A549 (cell line): ENCODE measurements at regions of chr9 and their contacts with region 1.

Region 1: DNA sequence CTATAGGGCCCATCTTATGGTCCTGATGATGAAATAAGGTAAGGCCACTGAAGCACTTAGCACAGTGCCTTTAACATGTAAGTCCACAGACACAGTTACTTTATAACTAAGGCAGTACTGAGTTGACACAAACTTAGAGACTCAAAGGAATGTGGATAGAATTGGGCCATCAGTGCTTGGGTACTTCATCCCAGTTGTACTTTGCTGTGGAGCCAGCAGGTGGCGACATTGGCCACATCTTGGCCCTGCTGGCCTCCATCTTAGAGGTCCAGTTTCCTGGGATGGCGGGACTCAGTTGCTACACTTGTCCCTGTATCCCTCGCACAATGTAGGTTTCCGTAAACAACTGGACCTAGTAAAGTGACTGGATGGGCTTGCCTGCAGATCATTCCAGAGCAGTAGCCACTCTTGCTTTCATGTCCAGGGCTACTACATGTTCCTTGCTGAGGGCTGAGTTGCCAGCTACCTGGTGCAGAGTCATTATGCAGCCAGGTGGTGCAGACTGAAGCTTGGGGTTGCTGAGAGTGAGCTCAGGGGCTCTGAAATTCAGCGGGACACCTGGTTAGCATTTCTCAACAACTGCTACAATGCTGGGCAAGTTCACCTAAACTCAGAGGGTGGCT is 10.6 kb downstream of the MTAP start:
- DNase-seq: peak in 1 of 2 experiments; percentile 77
- ATAC-seq: peak; percentile 84 to 85
- H3K4me3 ChIP-seq: no peak overlapping the region
- H3K27ac ChIP-seq: peak overlapping the region; percentile 56 to 75
- H3K4me1 ChIP-seq: peaks cover 51% of the 10 kb centered on the region
- CTCF ChIP-seq: peak; percentile 88
- EP300 ChIP-seq: no peak
- POLR2A ChIP-seq: no peak
- RAD21 ChIP-seq: peak; percentile 90 to 92

Region 2: GRCh38 chr9:21559424-21560280 is 253.4 kb before region 1 on chr9:
- CTCF ChIA-PET with region 1: no interaction called
- POLR2A ChIA-PET with region 1: no interaction called
- DNase-seq: peak; percentile 37 to 83
- ATAC-seq: peak; percentile 84 to 85
- H3K4me3 ChIP-seq: peak overlapping the region; percentile 79
- H3K27ac ChIP-seq: peak overlapping the region; percentile 94 to 98
- H3K4me1 ChIP-seq: peaks cover 13% of the 10 kb centered on the region; the same call in 2 of the 3 replicates
- CTCF ChIP-seq: no peak
- EP300 ChIP-seq: no peak; a peak in 1 of 5 replicates
- POLR2A ChIP-seq: peak; percentile 52
- RAD21 ChIP-seq: no peak; a peak in 1 of 5 replicates

Region 3: DNA sequence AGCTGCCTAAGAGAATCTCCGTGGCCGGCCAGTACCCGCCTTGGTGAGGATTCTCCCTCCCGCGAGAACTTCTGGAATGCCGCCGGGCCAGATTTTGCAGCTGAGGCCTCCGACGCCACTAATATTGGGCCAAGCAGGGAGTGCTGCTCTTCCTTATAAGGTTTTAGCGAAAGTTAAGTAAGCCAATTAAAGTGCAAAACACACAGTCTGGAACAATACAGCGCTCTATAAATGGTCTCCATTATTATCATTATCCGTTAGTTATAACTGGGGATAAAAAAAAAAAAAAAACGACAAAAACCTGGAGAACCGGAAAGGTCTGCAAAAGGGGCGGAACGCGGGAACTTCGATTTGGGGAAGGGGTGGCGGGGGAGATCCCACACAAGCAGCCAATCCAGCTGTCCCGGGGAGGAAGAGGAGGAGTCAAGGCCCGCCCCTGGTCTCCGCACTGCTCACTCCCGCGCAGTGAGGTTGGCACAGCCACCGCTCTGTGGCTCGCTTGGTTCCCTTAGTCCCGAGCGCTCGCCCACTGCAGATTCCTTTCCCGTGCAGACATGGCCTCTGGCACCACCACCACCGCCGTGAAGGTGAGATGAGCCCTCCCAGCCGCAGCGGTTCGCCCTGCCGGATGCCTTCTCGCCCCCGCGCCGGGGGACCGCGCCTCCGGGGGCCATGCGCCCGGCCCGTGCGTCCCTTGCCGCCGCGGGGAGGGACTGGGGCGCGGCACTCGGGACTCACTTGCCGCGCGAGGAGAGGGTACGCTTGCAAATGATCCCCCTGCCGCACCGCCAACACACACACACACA is 10.7 kb before region 1 on chr9 and contains the start of gene MTAP:
- CTCF ChIA-PET with region 1: interaction called, 18 read pairs
- POLR2A ChIA-PET with region 1: interaction called, 3 read pairs
- DNase-seq: peak; percentile 89 to 94
- ATAC-seq: peak; percentile 97 to 98
- H3K4me3 ChIP-seq: peak within 1 kb of the TSS; percentile 69
- H3K27ac ChIP-seq: peak within 1 kb of the TSS; percentile 87 to 95
- H3K4me1 ChIP-seq: peaks cover 41% of the 10 kb centered on the region
- CTCF ChIP-seq: no peak
- EP300 ChIP-seq: no peak
- POLR2A ChIP-seq: peak; percentile 97
- RAD21 ChIP-seq: peak in 1 of 2 experiments; percentile 9; a peak in 1 of 5 replicates
- polyA plus RNA-seq, gene MTAP: 2.4 and 4.1 TPM in 2 replicates

Region 4: DNA sequence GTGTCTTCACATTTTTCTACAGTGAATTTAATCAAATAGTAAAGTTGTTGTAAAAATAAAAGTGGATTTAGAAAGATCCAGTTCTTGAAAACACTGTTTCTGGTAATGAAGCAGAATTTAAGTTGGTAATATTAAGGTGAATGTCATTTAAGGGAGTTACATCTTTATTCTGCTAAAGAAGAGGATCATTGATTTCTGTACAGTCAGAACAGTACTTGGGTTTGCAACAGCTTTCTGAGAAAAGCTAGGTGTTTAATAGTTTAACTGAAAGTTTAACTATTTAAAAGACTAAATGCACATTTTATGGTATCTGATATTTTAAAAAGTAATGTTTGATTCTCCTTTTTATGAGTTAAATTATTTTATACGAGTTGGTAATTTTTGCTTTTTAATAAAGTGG is 49.8 kb after region 1 on chr9:
- CTCF ChIA-PET with region 1: no interaction called
- POLR2A ChIA-PET with region 1: no interaction called
- DNase-seq: no peak
- ATAC-seq: no peak
- H3K4me3 ChIP-seq: no peak overlapping the region
- H3K27ac ChIP-seq: no peak overlapping the region
- H3K4me1 ChIP-seq: no peaks in the 10 kb centered on the region
- CTCF ChIP-seq: no peak
- EP300 ChIP-seq: no peak
- POLR2A ChIP-seq: no peak
- RAD21 ChIP-seq: no peak

Region 5: GRCh38 chr9:21902136-21902535 is 89.1 kb after region 1 on chr9:
- CTCF ChIA-PET with region 1: no interaction called
- POLR2A ChIA-PET with region 1: no interaction called
- DNase-seq: no peak
- ATAC-seq: no peak
- H3K4me3 ChIP-seq: no peak overlapping the region
- H3K27ac ChIP-seq: no peak overlapping the region
- H3K4me1 ChIP-seq: peaks cover 3% of the 10 kb centered on the region; the same call in 1 of the 3 replicates
- CTCF ChIP-seq: no peak
- EP300 ChIP-seq: no peak
- POLR2A ChIP-seq: no peak
- RAD21 ChIP-seq: no peak

Region 6: DNA sequence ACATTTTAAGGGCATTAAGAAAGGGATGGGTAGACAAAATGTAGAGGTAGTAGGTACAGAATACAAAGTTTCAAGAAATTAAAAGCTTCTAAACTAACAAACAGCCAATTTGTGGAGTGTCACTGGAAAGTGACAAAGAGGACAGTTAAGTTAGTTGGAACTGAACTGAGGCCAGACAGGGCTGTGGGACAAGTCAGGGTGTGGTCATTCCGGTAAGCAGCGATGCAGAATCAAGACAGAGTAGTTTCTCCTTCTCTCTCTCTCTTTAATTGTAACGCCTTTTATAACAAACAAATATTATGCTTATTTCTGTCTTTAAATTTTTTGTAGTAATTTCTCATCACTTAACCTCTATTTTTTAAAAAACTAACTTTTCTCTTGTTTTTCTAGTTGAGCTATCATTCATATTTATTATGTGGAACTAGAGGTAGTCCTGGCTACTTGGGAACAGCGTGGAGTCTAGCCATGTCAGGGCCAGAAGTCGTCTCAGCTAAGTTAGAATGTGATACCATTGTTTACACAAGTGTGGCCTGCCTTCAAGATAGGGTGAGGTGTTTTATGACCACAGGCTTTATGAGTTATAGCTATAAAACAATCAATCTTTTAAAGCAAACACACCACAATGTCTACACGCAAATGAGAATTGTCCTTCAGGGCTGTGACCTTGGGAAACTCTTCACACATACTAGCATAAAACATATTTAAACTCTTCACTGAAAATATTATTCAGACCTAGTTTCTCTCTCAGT is 311.4 kb after region 1 on chr9:
- CTCF ChIA-PET with region 1: interaction called, 10 read pairs
- POLR2A ChIA-PET with region 1: no interaction called
- DNase-seq: peak; percentile 14 to 47
- ATAC-seq: peak in 1 of 2 experiments; percentile 73; a peak in 3 of 6 replicates
- H3K4me3 ChIP-seq: no peak overlapping the region
- H3K27ac ChIP-seq: peak overlapping the region; percentile 29 to 74; a peak in 4 of 6 replicates
- H3K4me1 ChIP-seq: peaks cover 46% of the 10 kb centered on the region
- CTCF ChIP-seq: no peak
- EP300 ChIP-seq: 0 out of 5 replicates have a peak, but pooled peaks of 1 of the 2 experiments have one; percentile 3
- POLR2A ChIP-seq: no peak
- RAD21 ChIP-seq: no peak

Region 7: DNA sequence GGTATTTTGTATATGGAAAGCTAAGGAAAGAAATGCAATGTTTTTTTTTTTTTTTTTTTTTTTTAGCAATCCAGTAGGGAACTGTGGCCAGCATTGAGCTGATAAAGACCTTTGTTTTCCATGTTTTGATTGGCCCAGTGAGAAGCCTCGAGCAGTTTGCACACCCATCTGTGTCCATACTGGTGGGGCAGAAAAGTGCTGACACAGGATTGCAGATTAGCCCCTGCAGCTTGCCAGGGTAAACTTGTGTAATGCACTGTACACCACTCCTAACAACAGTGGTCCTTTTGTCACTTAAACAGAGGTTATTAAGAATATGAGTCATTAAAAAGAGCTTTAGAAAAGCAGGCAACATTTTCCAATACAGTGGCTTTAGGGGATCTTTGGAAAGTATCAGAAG is 328.8 kb after region 1 on chr9:
- CTCF ChIA-PET with region 1: interaction called, 17 read pairs
- POLR2A ChIA-PET with region 1: no interaction called
- DNase-seq: no peak
- ATAC-seq: peak; percentile 57 to 58; a peak in 4 of 6 replicates
- H3K4me3 ChIP-seq: no peak overlapping the region
- H3K27ac ChIP-seq: peak overlapping the region; percentile 75 to 80
- H3K4me1 ChIP-seq: peaks cover 59% of the 10 kb centered on the region
- CTCF ChIP-seq: no peak
- EP300 ChIP-seq: no peak
- POLR2A ChIP-seq: no peak
- RAD21 ChIP-seq: no peak

Region 8: GRCh38 chr9:22165144-22165543 is 352.1 kb after region 1 on chr9:
- CTCF ChIA-PET with region 1: interaction called, 11 read pairs
- POLR2A ChIA-PET with region 1: no interaction called
- DNase-seq: no peak
- ATAC-seq: peak in 1 of 2 experiments; percentile 29; a peak in 2 of 6 replicates
- H3K4me3 ChIP-seq: no peak overlapping the region
- H3K27ac ChIP-seq: peak overlapping the region; percentile 79 to 82
- H3K4me1 ChIP-seq: peaks cover 56% of the 10 kb centered on the region
- CTCF ChIP-seq: no peak
- EP300 ChIP-seq: no peak
- POLR2A ChIP-seq: no peak
- RAD21 ChIP-seq: no peak

Region 9: DNA sequence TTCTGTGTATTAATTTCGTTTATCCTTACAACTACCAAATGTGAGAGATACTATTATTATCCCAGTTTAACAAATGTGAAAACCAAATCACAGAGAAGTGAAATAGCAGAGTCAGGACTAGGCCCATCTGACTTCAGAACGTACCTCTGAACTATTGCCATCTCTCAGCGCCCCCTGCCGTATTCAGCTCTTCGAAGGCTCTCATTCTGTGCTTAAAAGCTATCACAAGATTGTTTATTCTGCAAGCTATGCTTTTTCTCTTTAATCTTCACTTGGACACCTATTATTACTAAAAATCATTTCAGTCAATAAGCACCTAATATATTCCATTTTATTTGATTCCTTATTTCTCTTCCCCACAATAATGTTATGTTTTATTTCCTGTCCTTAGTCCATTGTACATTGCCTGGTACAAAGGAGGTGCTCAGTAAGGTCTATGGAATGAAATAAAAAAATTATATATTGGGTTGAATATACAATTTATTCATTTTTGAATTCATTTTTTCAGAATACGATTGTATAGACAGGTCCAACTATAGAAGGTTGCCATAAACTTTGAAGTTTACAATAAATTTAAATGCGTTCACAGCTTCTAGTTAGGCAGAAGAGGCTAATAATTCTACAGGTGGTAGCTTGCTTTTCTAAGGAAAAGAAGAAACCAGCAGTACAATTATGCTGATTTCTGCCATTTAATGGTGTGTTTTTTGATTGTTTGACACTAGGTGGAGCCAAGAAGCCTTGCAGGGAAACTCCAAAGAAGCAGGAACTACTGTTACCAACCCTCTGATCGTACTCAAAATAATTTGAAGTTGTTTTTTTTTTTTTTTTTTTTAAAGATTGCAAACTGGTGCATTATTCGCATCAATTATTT is 431.3 kb after region 1 on chr9:
- CTCF ChIA-PET with region 1: interaction called, 345 read pairs
- POLR2A ChIA-PET with region 1: interaction called, 6 read pairs
- DNase-seq: peak; percentile 18 to 71
- ATAC-seq: peak; percentile 86 to 96
- H3K4me3 ChIP-seq: no peak overlapping the region
- H3K27ac ChIP-seq: peak overlapping the region; percentile 28 to 64; a peak in 5 of 6 replicates
- H3K4me1 ChIP-seq: peaks cover 34% of the 10 kb centered on the region
- CTCF ChIP-seq: peak; percentile 54
- EP300 ChIP-seq: no peak
- POLR2A ChIP-seq: no peak
- RAD21 ChIP-seq: peak; percentile 66 to 69

Region 10: GRCh38 chr9:22416692-22417060 is 603.6 kb after region 1 on chr9:
- CTCF ChIA-PET with region 1: no interaction called
- POLR2A ChIA-PET with region 1: no interaction called
- DNase-seq: no peak
- ATAC-seq: peak; percentile 19 to 24; a peak in 3 of 6 replicates
- H3K4me3 ChIP-seq: no peak overlapping the region
- H3K27ac ChIP-seq: no peak overlapping the region
- H3K4me1 ChIP-seq: peaks cover 14% of the 10 kb centered on the region; the same call in 2 of the 3 replicates
- CTCF ChIP-seq: no peak
- EP300 ChIP-seq: no peak
- POLR2A ChIP-seq: no peak
- RAD21 ChIP-seq: no peak

Region 11: DNA sequence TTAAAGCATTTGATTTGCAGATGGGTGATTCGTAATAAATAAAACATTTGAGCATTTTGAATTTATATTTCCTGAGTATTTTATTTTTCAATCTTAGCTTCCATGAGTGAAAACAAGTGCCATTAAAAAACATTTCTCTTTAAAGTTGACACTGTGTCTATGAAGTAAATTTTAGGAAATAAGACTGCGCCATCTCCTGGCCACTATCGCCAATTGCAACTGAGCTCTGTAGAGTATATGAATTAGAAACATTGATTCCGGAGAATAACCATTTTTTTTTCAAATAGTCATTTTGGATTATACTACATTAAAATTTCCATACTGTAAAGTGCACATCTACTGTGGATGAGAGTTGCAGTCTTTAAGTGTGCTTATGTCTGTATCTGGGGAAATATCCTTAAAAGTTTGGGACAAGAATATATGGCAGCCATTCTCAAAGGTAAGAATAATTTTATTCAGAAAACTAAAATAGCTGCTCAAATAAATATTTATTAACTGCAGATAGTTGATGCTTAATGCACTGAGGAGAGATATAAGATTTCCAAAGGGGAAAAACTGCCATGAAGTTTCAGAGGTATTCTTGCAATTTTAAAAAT is 639.5 kb after region 1 on chr9:
- CTCF ChIA-PET with region 1: interaction called, 34 read pairs
- POLR2A ChIA-PET with region 1: no interaction called
- DNase-seq: peak; percentile 6 to 38
- ATAC-seq: peak in 1 of 2 experiments; percentile 66; a peak in 3 of 6 replicates
- H3K4me3 ChIP-seq: no peak overlapping the region
- H3K27ac ChIP-seq: no peak overlapping the region
- H3K4me1 ChIP-seq: peaks cover 20% of the 10 kb centered on the region; the same call in 2 of the 3 replicates
- CTCF ChIP-seq: peak; percentile 94
- EP300 ChIP-seq: no peak
- POLR2A ChIP-seq: no peak
- RAD21 ChIP-seq: peak; percentile 82 to 87